Kidney (tissue), 22 donors: ENCODE measurements at regions of chr17 and their contacts with region 1.

Region 1: GRCh38 chr17:12579288-12579687 is 86.4 kb upstream of the MYOCD start:
- DNase-seq: peak in 1 of 5 donors; percentile 53
- H3K4me3 ChIP-seq: no peak overlapping the region
- H3K27ac ChIP-seq: no peak overlapping the region
- H3K4me1 ChIP-seq: no peaks in the 10 kb centered on the region
- H3K27me3 ChIP-seq: no peaks in the 10 kb centered on the region
- CTCF ChIP-seq: no peak

Region 2: DNA sequence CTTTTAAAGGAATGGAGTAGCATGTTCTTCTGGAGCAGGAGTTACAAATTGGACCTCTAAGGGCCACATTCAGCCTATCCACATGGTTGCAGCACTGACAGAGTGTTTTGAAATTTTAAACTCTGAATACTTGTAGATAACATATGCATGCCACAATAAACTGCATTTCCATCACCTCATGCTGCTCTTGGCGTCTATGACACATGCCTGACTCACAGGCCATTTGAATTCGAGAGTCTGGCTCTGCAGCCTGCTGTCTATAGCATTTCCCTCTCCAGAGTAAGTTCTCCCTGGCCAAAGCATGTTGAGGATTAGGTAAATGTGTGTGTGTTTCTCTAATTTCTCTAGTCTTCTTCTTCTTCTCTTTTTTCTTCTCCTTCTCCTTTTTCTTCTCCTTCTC is 57.7 kb after region 1 on chr17:
- intact Hi-C with region 1: loop called (anchors 10 kb)
- DNase-seq: no peak
- H3K4me3 ChIP-seq: no peak overlapping the region
- H3K27ac ChIP-seq: no peak overlapping the region
- H3K4me1 ChIP-seq: no peaks in the 10 kb centered on the region
- H3K27me3 ChIP-seq: no peaks in the 10 kb centered on the region
- CTCF ChIP-seq: no peak